ENCODE measurements at regions of chr2 and their contacts with region 1.

Region 1: GRCh38 chr2:168346725-168347477 is 99.5 kb upstream of the STK39 start:
- DNase-seq: peak; percentile 73 to 92
- H3K4me3 ChIP-seq: peak overlapping the region; percentile 44 to 49 (median 47)
- H3K27ac ChIP-seq: peak overlapping the region; percentile 57 to 84 (median 79)
- H3K4me1 ChIP-seq: peaks cover 0 to 23% (median 20%) of the 10 kb centered on the region in 4 donors
- H3K27me3 ChIP-seq: no peaks in the 10 kb centered on the region
- CTCF ChIP-seq: peak in 6 of 7 experiments; percentile 55 to 86 (median 80)
- EP300 ChIP-seq: no peak
- POLR2A ChIP-seq: no peak

Region 2: DNA sequence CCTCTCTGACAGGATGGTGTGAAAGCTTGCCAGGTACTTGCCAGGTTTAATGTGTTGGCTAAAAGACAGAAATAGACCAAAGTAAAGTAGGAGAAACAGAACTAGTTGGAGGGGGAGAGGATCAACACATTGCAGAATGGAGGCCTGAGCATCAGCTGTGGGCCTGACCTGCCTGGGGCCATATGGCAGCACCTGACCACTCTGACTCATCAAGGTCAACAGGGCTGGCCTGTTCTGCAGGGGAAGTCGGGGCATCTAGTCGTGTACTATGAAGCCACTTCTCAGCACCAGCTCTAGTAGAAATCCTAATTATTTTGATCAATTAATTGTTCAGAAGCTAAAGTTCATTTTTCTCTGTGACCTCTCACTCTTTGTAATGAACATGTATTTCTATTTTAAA is 419.7 kb after region 1 on chr2:
- intact Hi-C with region 1: loop called (anchors 10 kb)
- DNase-seq: no peak
- H3K4me3 ChIP-seq: no peak overlapping the region
- H3K27ac ChIP-seq: no peak overlapping the region
- H3K4me1 ChIP-seq: peaks cover 0 to 15% (median 3%) of the 10 kb centered on the region in 4 donors
- H3K27me3 ChIP-seq: no peaks in the 10 kb centered on the region
- CTCF ChIP-seq: no peak
- EP300 ChIP-seq: no peak
- POLR2A ChIP-seq: no peak

Region 3: GRCh38 chr2:168912901-168913369 is 566.0 kb after region 1 on chr2:
- intact Hi-C with region 1: loop called (anchors 10 kb)
- DNase-seq: peak; percentile 29 to 60
- H3K4me3 ChIP-seq: no peak overlapping the region
- H3K27ac ChIP-seq: no peak overlapping the region
- H3K4me1 ChIP-seq: peaks cover 0 to 6% (median 2%) of the 10 kb centered on the region in 4 donors
- H3K27me3 ChIP-seq: peaks cover 0 to 3% (median 0%) of the 10 kb centered on the region in 3 donors
- CTCF ChIP-seq: no peak
- EP300 ChIP-seq: no peak
- POLR2A ChIP-seq: no peak

Measured in stomach (tissue), 19 donors.